ENCODE measurements at regions of chr11 and their contacts with region 1.

Region 1: DNA sequence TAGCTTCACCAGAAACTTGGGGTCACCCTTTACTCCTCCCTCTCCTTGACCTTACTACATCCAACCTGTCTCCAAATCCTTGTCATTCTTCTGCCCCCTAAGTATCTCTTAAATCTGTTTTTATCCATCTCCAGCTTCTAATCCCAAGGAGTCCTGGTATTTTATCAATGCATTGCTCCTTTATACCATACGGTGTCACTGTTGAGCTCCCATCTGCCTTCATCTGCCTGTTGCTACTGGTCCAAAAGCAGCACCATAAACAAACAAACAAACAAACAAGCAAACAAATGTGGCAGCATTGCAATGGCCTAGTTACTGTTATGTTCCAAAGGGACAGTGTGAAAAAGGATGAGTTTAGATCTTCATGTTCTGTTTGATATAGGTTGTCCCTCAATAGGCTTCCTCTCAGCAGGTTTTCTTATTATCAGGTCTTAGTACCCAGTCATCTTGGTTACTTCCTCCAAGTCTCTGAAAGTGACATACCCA is 34.2 kb downstream of the DNHD1 start:
- DNase-seq: no peak
- H3K4me3 ChIP-seq: no peak overlapping the region
- H3K27ac ChIP-seq: no peak overlapping the region
- H3K4me1 ChIP-seq: no peaks in the 10 kb centered on the region
- H3K27me3 ChIP-seq: no peaks in the 10 kb centered on the region
- CTCF ChIP-seq: peak in 2 of 3 donors; percentile 73 to 82
- EP300 ChIP-seq: no peak
- POLR2A ChIP-seq: no peak

Region 2: GRCh38 chr11:6489306-6489705 is 42.0 kb before region 1 on chr11:
- intact Hi-C with region 1: no loop called
- DNase-seq: no peak
- H3K4me3 ChIP-seq: no peak overlapping the region
- H3K27ac ChIP-seq: no peak overlapping the region
- H3K4me1 ChIP-seq: no peaks in the 10 kb centered on the region
- H3K27me3 ChIP-seq: no peaks in the 10 kb centered on the region
- CTCF ChIP-seq: no peak
- EP300 ChIP-seq: no peak
- POLR2A ChIP-seq: no peak

Region 3: GRCh38 chr11:6682936-6683861 is 151.9 kb after region 1 on chr11 and contains the start of gene MRPL17:
- intact Hi-C with region 1: loop called in 3 of 4 experiments (anchors 5 to 10 kb)
- DNase-seq: peak; percentile 99 to 100 (median 99)
- H3K4me3 ChIP-seq: peak within 1 kb of the TSS; percentile 92
- H3K27ac ChIP-seq: peak within 1 kb of the TSS; percentile 84 to 89
- H3K4me1 ChIP-seq: peaks cover 4% of the 10 kb centered on the region
- H3K27me3 ChIP-seq: no peaks in the 10 kb centered on the region
- CTCF ChIP-seq: peak; percentile 92 to 95 (median 95)
- EP300 ChIP-seq: no peak
- POLR2A ChIP-seq: peak; percentile 48
- total RNA-seq, gene MRPL17: 23.0 to 37.9 (median 30.7) TPM

Region 4: GRCh38 chr11:6705905-6706535 is 174.7 kb after region 1 on chr11:
- intact Hi-C with region 1: loop called in 2 of 4 experiments (anchors 5 to 10 kb)
- DNase-seq: peak in 3 of 5 donors; percentile 25 to 67 (median 45)
- H3K4me3 ChIP-seq: no peak overlapping the region
- H3K27ac ChIP-seq: no peak overlapping the region
- H3K4me1 ChIP-seq: no peaks in the 10 kb centered on the region
- H3K27me3 ChIP-seq: no peaks in the 10 kb centered on the region
- CTCF ChIP-seq: peak; percentile 69 to 77 (median 75)
- EP300 ChIP-seq: no peak
- POLR2A ChIP-seq: no peak